IMR-90 (cell line): ENCODE measurements at regions of chr3 and their contacts with region 1.

Region 1: GRCh38 chr3:56339671-56340070 is 128.6 kb downstream of the ERC2 start:
- DNase-seq: no peak
- ATAC-seq: no peak
- H3K4me3 ChIP-seq: no peak overlapping the region
- H3K27ac ChIP-seq: no peak overlapping the region
- H3K4me1 ChIP-seq: no peaks in the 10 kb centered on the region
- H3K27me3 ChIP-seq: no peaks in the 10 kb centered on the region; the same call in 1 of the 2 replicates
- CTCF ChIP-seq: no peak
- POLR2A ChIP-seq: no peak
- RAD21 ChIP-seq: no peak

Region 2: GRCh38 chr3:56494686-56495322 is 155.1 kb after region 1 on chr3:
- CTCF ChIA-PET with region 1: no interaction called
- POLR2A ChIA-PET with region 1: no interaction called
- dilution Hi-C with region 1: no loop called
- in situ Hi-C with region 1: no loop called
- intact Hi-C with region 1: loop called (anchors 1 kb)
- DNase-seq: peak; percentile 80
- ATAC-seq: peak; percentile 96
- H3K4me3 ChIP-seq: no peak overlapping the region
- H3K27ac ChIP-seq: no peak overlapping the region
- H3K4me1 ChIP-seq: no peaks in the 10 kb centered on the region
- H3K27me3 ChIP-seq: no peaks in the 10 kb centered on the region
- CTCF ChIP-seq: peak; percentile 94
- POLR2A ChIP-seq: no peak
- RAD21 ChIP-seq: peak; percentile 55

Region 3: GRCh38 chr3:56547486-56547885 is 207.8 kb after region 1 on chr3:
- CTCF ChIA-PET with region 1: no interaction called
- POLR2A ChIA-PET with region 1: no interaction called
- dilution Hi-C with region 1: no loop called
- in situ Hi-C with region 1: no loop called
- intact Hi-C with region 1: loop called (anchors 1 kb)
- DNase-seq: no peak
- ATAC-seq: no peak
- H3K4me3 ChIP-seq: no peak overlapping the region
- H3K27ac ChIP-seq: no peak overlapping the region
- H3K4me1 ChIP-seq: no peaks in the 10 kb centered on the region
- H3K27me3 ChIP-seq: peaks cover 3% of the 10 kb centered on the region
- CTCF ChIP-seq: 0 out of 2 replicates have a peak, but pooled peaks have one; percentile 13
- POLR2A ChIP-seq: no peak
- RAD21 ChIP-seq: 0 out of 2 replicates have a peak, but pooled peaks have one; percentile 6